T-cell (primary cell): ENCODE measurements at regions of chr9 and their contacts with region 1.

Region 1: GRCh38 chr9:114619191-114619761 is 8.2 kb downstream of the TMEM268 start:
- DNase-seq: peak in 11 of 35 experiments; percentile 6 to 35 (median 21)
- ATAC-seq: no peak
- H3K4me3 ChIP-seq: no peak overlapping the region
- H3K4me3 Mint-ChIP-seq: peak overlapping the region; percentile 60 to 79 (median 68)
- H3K27ac ChIP-seq: no peak overlapping the region
- H3K27ac Mint-ChIP-seq: peak overlapping the region; percentile 92 to 93
- H3K4me1 ChIP-seq: peaks cover 0 to 12% of the 10 kb centered on the region in 2 experiments
- H3K4me1 Mint-ChIP-seq: peaks cover 28 to 43% (median 31%) of the 10 kb centered on the region in 3 donors
- H3K27me3 ChIP-seq: no peaks in the 10 kb centered on the region
- H3K27me3 Mint-ChIP-seq: no peaks in the 10 kb centered on the region

Region 2: DNA sequence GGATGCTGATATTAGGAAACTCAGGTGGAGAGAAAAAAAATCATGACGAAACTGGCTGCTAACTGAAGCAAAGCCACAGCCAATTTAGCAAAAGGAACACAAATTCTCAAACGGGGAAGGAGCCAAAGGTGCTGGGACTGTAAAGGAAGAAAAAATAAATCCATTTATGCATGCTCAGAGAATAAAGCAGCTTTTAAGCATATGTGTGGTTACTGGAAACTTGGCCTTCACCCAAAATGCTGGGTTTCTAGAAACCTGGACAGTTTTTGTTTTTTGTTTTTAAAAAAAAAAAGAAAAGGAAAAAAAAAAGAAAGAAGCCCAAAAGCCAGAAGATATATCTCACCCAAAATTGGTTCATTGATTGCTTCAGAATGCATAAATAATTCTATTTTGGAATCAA is 122.0 kb before region 1 on chr9:
- CTCF ChIA-PET with region 1: no interaction called
- POLR2A ChIA-PET with region 1: no interaction called
- DNase-seq: peak in 1 of 35 experiments; percentile 44
- ATAC-seq: no peak
- H3K4me3 ChIP-seq: no peak overlapping the region
- H3K4me3 Mint-ChIP-seq: no peak overlapping the region
- H3K27ac ChIP-seq: no peak overlapping the region
- H3K27ac Mint-ChIP-seq: peak overlapping the region in 1 of 2 donors; percentile 36
- H3K4me1 ChIP-seq: peaks cover 3 to 9% of the 10 kb centered on the region in 2 experiments
- H3K4me1 Mint-ChIP-seq: peaks cover 14 to 27% (median 25%) of the 10 kb centered on the region in 3 donors
- H3K27me3 ChIP-seq: no peaks in the 10 kb centered on the region
- H3K27me3 Mint-ChIP-seq: peaks cover 0 to 3% of the 10 kb centered on the region in 2 donors

Region 3: DNA sequence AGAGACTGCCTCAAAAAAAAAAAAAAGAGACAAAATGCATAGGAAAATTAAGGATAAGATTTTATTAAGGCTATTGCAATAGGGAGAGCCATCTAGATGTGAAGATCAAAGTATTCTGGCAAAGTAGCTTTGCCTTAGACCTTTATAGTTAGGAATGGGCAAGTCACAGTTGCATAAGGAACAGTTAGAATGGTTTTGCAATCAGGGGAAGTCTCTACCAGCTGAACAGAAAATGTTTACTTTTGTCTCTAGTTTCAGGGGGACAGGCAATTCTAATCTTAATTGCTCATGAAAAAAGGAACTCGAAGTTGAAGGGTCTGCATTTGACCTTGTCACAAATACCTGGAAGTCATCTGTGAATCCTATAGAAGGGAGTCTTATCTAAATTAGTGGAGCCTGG is 44.8 kb before region 1 on chr9:
- CTCF ChIA-PET with region 1: no interaction called
- POLR2A ChIA-PET with region 1: interaction called in 1 of 2 experiments, 12 read pairs
- DNase-seq: no peak
- ATAC-seq: no peak
- H3K4me3 ChIP-seq: no peak overlapping the region
- H3K4me3 Mint-ChIP-seq: no peak overlapping the region
- H3K27ac ChIP-seq: no peak overlapping the region
- H3K27ac Mint-ChIP-seq: no peak overlapping the region
- H3K4me1 ChIP-seq: no peaks in the 10 kb centered on the region
- H3K4me1 Mint-ChIP-seq: no peaks in the 10 kb centered on the region
- H3K27me3 ChIP-seq: no peaks in the 10 kb centered on the region
- H3K27me3 Mint-ChIP-seq: no peaks in the 10 kb centered on the region